ENCODE measurements at regions of chr7 and their contacts with region 1.

Region 1: DNA sequence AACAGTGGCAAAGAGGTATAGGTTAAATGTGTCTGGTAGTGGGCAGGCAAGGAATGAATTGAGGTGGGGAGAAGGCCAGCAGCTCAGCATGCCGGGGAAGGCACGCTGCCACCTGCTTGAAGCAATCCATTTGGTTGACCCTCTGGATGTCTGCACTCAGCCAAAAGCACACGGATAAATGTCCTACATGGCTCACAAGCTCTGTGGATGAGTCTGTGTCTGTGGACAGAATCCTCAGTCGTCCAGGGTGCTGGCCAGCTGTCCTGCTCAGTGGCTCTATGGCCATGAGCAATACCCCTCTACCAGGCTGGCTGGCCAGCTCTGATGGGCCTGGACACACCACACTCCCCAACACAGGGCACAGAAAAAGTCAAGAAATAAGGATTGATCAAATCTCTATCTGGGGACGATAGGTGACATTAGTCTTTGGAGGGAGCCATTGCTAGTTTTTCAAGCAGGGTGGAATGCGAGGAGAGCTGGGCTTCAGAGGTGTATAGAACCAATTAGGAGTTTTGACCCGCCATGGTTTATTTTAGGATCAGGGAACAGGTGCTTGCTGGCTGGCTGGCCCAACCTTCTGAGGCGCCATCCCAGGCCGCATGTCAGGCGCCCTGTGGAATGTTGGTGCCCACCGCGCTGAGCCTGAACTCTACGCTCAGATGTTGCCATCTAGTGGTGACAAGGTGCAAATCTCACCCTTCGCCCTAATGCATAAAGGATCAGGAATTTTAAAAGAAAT is 493.4 kb downstream of the TNS3 start:
- DNase-seq: peak; percentile 67
- ATAC-seq: peak; percentile 69
- H3K4me3 ChIP-seq: no peak overlapping the region
- H3K27ac ChIP-seq: no peak overlapping the region
- H3K4me1 ChIP-seq: peaks cover 22% of the 10 kb centered on the region
- H3K27me3 ChIP-seq: no peaks in the 10 kb centered on the region
- CTCF ChIP-seq: peak; percentile 89
- POLR2A ChIP-seq: no peak
- RAD21 ChIP-seq: peak; percentile 94

Region 2: GRCh38 chr7:46486256-46487206 is 602.0 kb before region 1 on chr7:
- CTCF ChIA-PET with region 1: no interaction called
- POLR2A ChIA-PET with region 1: no interaction called
- dilution Hi-C with region 1: no loop called
- in situ Hi-C with region 1: no loop called
- intact Hi-C with region 1: loop called (anchors 10 kb)
- DNase-seq: peak; percentile 88
- ATAC-seq: peak; percentile 83
- H3K4me3 ChIP-seq: no peak overlapping the region
- H3K27ac ChIP-seq: peak overlapping the region; percentile 41
- H3K4me1 ChIP-seq: peaks cover 14% of the 10 kb centered on the region
- H3K27me3 ChIP-seq: no peaks in the 10 kb centered on the region
- CTCF ChIP-seq: no peak
- POLR2A ChIP-seq: no peak
- RAD21 ChIP-seq: no peak

Region 3: DNA sequence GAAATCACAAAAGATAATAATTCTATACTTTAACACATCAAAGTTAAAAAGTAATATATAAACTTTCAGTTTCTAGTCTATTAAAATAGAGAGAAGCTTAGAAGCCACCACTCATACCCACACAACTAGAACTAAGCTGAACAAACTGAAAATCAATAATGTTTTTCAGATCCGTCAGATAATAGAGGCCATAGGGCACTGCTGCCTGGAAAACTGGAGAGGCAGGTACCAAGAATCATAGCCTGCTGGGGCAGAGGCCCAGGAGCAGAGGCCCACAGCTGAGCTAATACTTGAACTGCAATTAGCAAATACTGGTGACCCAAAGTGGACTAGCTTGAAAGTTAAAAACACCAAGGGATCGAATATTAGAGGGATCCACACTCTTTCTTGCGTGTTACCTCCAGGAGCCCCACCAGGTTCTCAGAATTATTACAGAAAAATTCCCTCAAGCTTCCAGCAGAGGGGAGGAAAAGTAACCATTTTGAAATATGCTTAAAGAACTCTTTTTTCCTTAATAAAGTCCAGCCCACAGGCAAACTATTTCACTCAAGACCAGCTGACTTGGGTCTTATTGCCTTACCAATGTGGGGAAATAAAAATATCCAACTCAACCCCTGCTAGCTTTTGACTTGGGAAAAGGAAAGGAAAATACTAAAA is 393.3 kb before region 1 on chr7:
- CTCF ChIA-PET with region 1: no interaction called
- POLR2A ChIA-PET with region 1: no interaction called
- dilution Hi-C with region 1: no loop called
- in situ Hi-C with region 1: no loop called
- intact Hi-C with region 1: loop called (anchors 5 kb)
- DNase-seq: no peak
- ATAC-seq: no peak
- H3K4me3 ChIP-seq: no peak overlapping the region
- H3K27ac ChIP-seq: no peak overlapping the region
- H3K4me1 ChIP-seq: no peaks in the 10 kb centered on the region
- H3K27me3 ChIP-seq: no peaks in the 10 kb centered on the region
- CTCF ChIP-seq: peak; percentile 34
- POLR2A ChIP-seq: no peak
- RAD21 ChIP-seq: peak; percentile 26; the same call in 1 of the 2 replicates

Region 4: DNA sequence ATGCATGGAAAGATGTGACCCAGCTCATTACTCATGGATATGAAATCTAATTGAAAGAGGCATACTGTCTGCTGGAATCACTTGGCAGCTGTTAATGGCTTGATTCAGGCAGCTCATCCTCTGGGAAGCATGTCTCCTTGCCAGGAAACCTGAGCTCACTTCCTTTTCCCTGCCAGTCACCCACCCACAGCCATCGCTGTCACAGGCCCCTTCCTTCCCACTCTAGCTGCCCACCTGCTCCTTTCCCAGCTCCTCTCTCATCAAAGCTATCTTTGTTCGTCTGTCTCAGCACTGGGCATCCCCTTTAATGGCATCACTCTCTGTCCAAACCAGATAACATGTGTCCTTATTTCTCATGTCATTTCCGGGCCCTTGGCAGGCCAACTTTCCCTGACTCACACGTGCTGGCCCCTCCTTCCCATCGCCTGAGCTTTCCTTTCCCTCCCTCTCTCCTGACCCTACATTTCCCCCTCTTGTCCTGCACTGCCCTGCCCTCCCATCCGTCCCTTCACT is 228.5 kb before region 1 on chr7:
- CTCF ChIA-PET with region 1: no interaction called
- POLR2A ChIA-PET with region 1: no interaction called
- dilution Hi-C with region 1: no loop called
- in situ Hi-C with region 1: no loop called
- intact Hi-C with region 1: loop called (anchors 10 kb)
- DNase-seq: peak; percentile 74
- ATAC-seq: peak; percentile 38
- H3K4me3 ChIP-seq: no peak overlapping the region
- H3K27ac ChIP-seq: no peak overlapping the region
- H3K4me1 ChIP-seq: peaks cover 4% of the 10 kb centered on the region; the same call in 1 of the 2 replicates
- H3K27me3 ChIP-seq: no peaks in the 10 kb centered on the region
- CTCF ChIP-seq: no peak
- POLR2A ChIP-seq: no peak
- RAD21 ChIP-seq: no peak

Region 5: GRCh38 chr7:47031786-47032535 is 56.5 kb before region 1 on chr7:
- CTCF ChIA-PET with region 1: no interaction called
- POLR2A ChIA-PET with region 1: no interaction called
- dilution Hi-C with region 1: no loop called
- in situ Hi-C with region 1: no loop called
- intact Hi-C with region 1: no loop called
- DNase-seq: no peak
- ATAC-seq: no peak; the same call in 1 of the 2 replicates
- H3K4me3 ChIP-seq: no peak overlapping the region
- H3K27ac ChIP-seq: no peak overlapping the region
- H3K4me1 ChIP-seq: no peaks in the 10 kb centered on the region
- H3K27me3 ChIP-seq: peaks cover 16% of the 10 kb centered on the region
- CTCF ChIP-seq: no peak
- POLR2A ChIP-seq: no peak
- RAD21 ChIP-seq: no peak

Region 6: GRCh38 chr7:47132471-47132870 is 44.0 kb after region 1 on chr7:
- CTCF ChIA-PET with region 1: no interaction called
- POLR2A ChIA-PET with region 1: no interaction called
- dilution Hi-C with region 1: no loop called
- in situ Hi-C with region 1: no loop called
- intact Hi-C with region 1: no loop called
- DNase-seq: peak; percentile 21
- ATAC-seq: peak; percentile 42; the same call in 1 of the 2 replicates
- H3K4me3 ChIP-seq: no peak overlapping the region
- H3K27ac ChIP-seq: no peak overlapping the region
- H3K4me1 ChIP-seq: no peaks in the 10 kb centered on the region
- H3K27me3 ChIP-seq: no peaks in the 10 kb centered on the region
- CTCF ChIP-seq: no peak
- POLR2A ChIP-seq: no peak
- RAD21 ChIP-seq: no peak

Region 7: GRCh38 chr7:47149208-47149839 is 60.8 kb after region 1 on chr7:
- CTCF ChIA-PET with region 1: no interaction called
- POLR2A ChIA-PET with region 1: no interaction called
- dilution Hi-C with region 1: no loop called
- in situ Hi-C with region 1: no loop called
- intact Hi-C with region 1: loop called (anchors 5 kb)
- DNase-seq: no peak
- ATAC-seq: no peak
- H3K4me3 ChIP-seq: no peak overlapping the region
- H3K27ac ChIP-seq: peak overlapping the region; percentile 97
- H3K4me1 ChIP-seq: peaks cover 32% of the 10 kb centered on the region
- H3K27me3 ChIP-seq: no peaks in the 10 kb centered on the region
- CTCF ChIP-seq: no peak
- POLR2A ChIP-seq: no peak
- RAD21 ChIP-seq: no peak

Region 8: GRCh38 chr7:47179812-47180515 is 91.5 kb after region 1 on chr7:
- CTCF ChIA-PET with region 1: interaction called, 11 read pairs
- POLR2A ChIA-PET with region 1: no interaction called
- dilution Hi-C with region 1: no loop called
- in situ Hi-C with region 1: loop called (anchors 5 kb)
- intact Hi-C with region 1: loop called (anchors 2 kb)
- DNase-seq: peak; percentile 72
- ATAC-seq: peak; percentile 97
- H3K4me3 ChIP-seq: no peak overlapping the region
- H3K27ac ChIP-seq: no peak overlapping the region
- H3K4me1 ChIP-seq: peaks cover 7% of the 10 kb centered on the region; the same call in 1 of the 2 replicates
- H3K27me3 ChIP-seq: peaks cover 27% of the 10 kb centered on the region
- CTCF ChIP-seq: peak; percentile 96
- POLR2A ChIP-seq: no peak
- RAD21 ChIP-seq: peak; percentile 97